ENCODE measurements at regions of chr6 and their contacts with region 1.

Region 1: DNA sequence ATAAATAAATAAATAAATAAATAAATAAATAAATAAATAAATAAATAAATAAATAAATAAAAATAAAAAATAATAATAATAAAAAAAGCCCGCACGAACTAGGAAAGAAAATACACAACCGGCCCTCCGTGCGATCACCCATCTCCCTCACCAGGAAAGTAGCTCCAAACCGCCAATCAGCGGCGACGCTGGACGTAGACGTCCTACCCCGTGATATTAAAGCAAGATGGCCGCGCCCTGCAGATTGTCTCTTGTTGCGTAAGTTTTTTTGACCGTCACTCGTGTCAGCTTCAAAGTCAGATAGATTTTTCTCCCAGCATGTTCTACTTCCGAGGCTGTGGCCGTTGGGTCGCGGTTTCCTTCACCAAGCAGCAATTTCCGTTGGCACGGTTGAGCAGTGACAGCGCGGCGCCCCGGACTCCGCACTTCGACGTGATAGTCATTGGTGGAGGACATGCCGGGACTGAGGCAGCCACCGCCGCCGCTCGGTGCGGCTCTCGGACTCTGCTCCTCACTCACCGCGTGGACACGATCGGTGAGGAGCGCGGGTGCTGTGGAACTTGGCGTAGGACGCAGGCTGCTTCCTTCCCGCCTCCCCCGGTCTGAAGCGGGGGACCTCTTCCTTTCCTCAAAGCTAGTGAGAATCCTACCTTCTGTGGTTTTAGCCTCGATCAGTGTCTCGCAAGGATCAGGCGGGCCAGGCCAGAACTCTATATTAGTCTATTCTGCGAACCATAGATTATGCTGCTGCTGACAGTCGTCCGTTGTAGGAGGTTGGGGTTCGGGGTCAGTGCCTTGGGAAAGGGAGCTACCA is at the start of gene MTO1:
- DNase-seq: peak; percentile 95
- H3K4me3 ChIP-seq: peak within 1 kb of the TSS; percentile 99
- H3K27ac ChIP-seq: peak within 1 kb of the TSS; percentile 99
- H3K4me1 ChIP-seq: peaks cover 32% of the 10 kb centered on the region
- CTCF ChIP-seq: no peak
- total RNA-seq, gene MTO1: 44.0 and 63.8 TPM in 2 replicates

Region 2: DNA sequence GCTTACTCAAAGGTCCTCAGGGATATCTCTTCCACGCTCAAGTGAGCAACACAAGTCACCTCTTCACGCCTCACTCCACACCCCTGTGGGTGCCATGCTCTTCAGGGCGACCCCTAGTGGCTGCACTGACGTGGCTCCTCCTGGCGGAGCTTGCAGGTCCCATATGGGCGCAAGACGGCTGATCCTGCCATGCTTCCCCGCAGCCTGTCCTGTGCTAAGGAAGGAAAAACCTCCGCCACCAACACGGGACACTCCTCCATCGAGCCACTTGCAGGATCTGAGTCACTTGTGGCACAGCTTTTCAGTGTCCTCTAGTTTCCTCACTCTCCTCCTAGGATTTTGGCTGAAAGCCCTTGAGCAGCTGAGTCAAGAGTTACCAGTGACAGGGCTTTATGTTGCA is 327.2 kb before region 1 on chr6:
- CTCF ChIA-PET with region 1: no interaction called
- POLR2A ChIA-PET with region 1: no interaction called
- intact Hi-C with region 1: no loop called
- DNase-seq: peak; percentile 23
- H3K4me3 ChIP-seq: no peak overlapping the region
- H3K27ac ChIP-seq: no peak overlapping the region
- H3K4me1 ChIP-seq: no peaks in the 10 kb centered on the region
- CTCF ChIP-seq: peak; percentile 69

Region 3: DNA sequence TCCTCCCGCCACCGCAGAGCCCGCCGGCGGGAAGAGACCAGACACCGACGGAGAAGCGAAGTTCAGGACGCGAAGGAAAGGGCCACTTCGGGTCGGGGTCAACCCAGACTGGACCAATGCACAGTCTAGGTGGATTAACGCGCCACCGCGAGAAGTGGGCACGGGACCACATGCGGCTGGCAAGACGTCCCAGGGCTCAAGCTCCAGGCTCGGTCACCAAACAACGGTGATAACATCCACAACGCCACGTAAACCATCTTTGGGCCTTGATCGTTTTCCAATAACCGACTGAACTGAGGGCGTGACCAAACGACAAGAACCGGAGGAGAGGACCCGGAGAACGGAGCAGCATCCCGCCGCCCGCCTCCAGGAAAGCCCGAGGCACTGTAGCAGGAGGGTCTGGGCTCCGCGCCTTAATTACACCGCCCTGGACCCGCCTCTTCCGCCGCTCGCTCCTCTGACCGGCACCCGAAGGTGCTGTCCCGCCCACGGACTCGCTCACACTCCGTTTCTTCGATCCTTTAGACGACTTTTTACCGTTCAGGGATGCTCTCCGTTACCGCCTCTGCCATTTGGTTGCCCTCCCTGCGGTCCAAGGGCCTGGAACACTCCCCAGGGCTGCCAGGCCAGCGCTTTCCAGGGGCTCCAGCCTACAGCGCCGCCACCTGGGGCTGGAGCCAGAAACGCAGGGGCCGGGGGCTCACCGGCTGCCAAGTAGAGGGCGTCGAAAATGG is 151.8 kb before region 1 on chr6:
- CTCF ChIA-PET with region 1: no interaction called
- POLR2A ChIA-PET with region 1: interaction called, 7 read pairs
- intact Hi-C with region 1: loop called (anchors 5 kb)
- DNase-seq: peak; percentile 81
- H3K4me3 ChIP-seq: peak overlapping the region; percentile 75
- H3K27ac ChIP-seq: peak overlapping the region; percentile 65
- H3K4me1 ChIP-seq: peaks cover 24% of the 10 kb centered on the region
- CTCF ChIP-seq: peak; percentile 89

Region 4: GRCh38 chr6:73443555-73443954 is 18.2 kb before region 1 on chr6:
- CTCF ChIA-PET with region 1: no interaction called
- POLR2A ChIA-PET with region 1: interaction called, 15 read pairs
- intact Hi-C with region 1: no loop called
- DNase-seq: no peak
- H3K4me3 ChIP-seq: no peak overlapping the region
- H3K27ac ChIP-seq: no peak overlapping the region
- H3K4me1 ChIP-seq: peaks cover 19% of the 10 kb centered on the region
- CTCF ChIP-seq: no peak

Region 5: GRCh38 chr6:73471686-73472290 is 10.0 kb after region 1 on chr6:
- CTCF ChIA-PET with region 1: interaction called, 6 read pairs
- POLR2A ChIA-PET with region 1: interaction called, 62 read pairs
- intact Hi-C with region 1: loop called (anchors 1 kb)
- DNase-seq: peak; percentile 73
- H3K4me3 ChIP-seq: peak overlapping the region; percentile 46
- H3K27ac ChIP-seq: peak overlapping the region; percentile 95
- H3K4me1 ChIP-seq: peaks cover 33% of the 10 kb centered on the region
- CTCF ChIP-seq: no peak

Region 6: GRCh38 chr6:73585566-73586415 is 124.0 kb after region 1 on chr6:
- CTCF ChIA-PET with region 1: no interaction called
- POLR2A ChIA-PET with region 1: interaction called, 10 read pairs
- intact Hi-C with region 1: no loop called
- DNase-seq: peak; percentile 70
- H3K4me3 ChIP-seq: peak overlapping the region; percentile 56
- H3K27ac ChIP-seq: peak overlapping the region; percentile 78
- H3K4me1 ChIP-seq: peaks cover 21% of the 10 kb centered on the region
- CTCF ChIP-seq: no peak

Region 7: GRCh38 chr6:73653571-73654424 is 192.1 kb after region 1 on chr6 and contains the start of gene SLC17A5:
- CTCF ChIA-PET with region 1: no interaction called
- POLR2A ChIA-PET with region 1: interaction called, 11 read pairs
- intact Hi-C with region 1: no loop called
- DNase-seq: peak; percentile 93
- H3K4me3 ChIP-seq: peak within 1 kb of the TSS; percentile 96
- H3K27ac ChIP-seq: peak within 1 kb of the TSS; percentile 83
- H3K4me1 ChIP-seq: peaks cover 19% of the 10 kb centered on the region
- CTCF ChIP-seq: no peak
- total RNA-seq, gene SLC17A5: 7.4 and 8.5 TPM in 2 replicates

Measured in OCI-LY7 (cell line).